ENCODE measurements at regions of chr1 and their contacts with region 1.

Region 1: DNA sequence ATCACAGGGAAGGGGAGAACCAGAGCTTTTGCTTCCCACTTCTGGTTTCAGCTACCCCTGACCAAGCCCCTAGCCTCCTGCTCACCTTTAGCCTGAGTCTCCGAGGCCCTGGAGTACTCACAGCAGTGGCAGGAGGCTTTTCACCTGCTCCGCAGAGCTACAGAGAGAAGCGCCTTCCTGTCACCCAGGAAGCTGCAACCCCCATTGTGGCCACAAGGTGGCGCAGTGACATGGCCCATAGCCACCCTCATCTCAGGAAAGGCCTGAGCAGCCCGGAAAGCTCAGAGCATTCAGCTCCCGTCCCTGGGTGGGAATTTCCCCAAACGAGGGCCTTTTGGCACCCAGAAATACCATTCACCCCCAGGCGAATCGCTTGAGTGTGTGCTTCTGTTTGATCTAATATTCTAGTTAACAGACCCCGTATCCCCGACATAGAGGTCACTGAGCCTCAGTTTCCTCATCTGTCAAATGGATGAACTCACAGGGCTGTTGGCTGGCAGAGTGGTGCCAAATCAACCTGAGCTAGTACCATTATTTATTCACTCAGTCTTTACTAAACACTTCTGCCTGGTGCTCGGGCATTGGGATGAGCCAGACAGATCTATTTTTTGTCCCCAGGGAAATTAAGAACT is 25.3 kb downstream of the A3GALT2 start:
- DNase-seq: peak; percentile 43 to 93
- H3K4me3 ChIP-seq: no peak overlapping the region
- H3K27ac ChIP-seq: peak overlapping the region; percentile 44 to 54
- H3K4me1 ChIP-seq: peaks cover 4 to 13% of the 10 kb centered on the region in 2 donors
- H3K27me3 ChIP-seq: no peaks in the 10 kb centered on the region
- CTCF ChIP-seq: peak; percentile 93 to 98 (median 98)

Region 2: GRCh38 chr1:33127001-33127791 is 168.4 kb before region 1 on chr1:
- intact Hi-C with region 1: loop called (anchors 10 kb)
- DNase-seq: peak; percentile 97 to 100
- H3K4me3 ChIP-seq: peak overlapping the region; percentile 63 to 79
- H3K27ac ChIP-seq: peak overlapping the region; percentile 86 to 88
- H3K4me1 ChIP-seq: peaks cover 7 to 15% of the 10 kb centered on the region in 2 donors
- H3K27me3 ChIP-seq: no peaks in the 10 kb centered on the region
- CTCF ChIP-seq: peak; percentile 85 to 89 (median 87)

Region 3: DNA sequence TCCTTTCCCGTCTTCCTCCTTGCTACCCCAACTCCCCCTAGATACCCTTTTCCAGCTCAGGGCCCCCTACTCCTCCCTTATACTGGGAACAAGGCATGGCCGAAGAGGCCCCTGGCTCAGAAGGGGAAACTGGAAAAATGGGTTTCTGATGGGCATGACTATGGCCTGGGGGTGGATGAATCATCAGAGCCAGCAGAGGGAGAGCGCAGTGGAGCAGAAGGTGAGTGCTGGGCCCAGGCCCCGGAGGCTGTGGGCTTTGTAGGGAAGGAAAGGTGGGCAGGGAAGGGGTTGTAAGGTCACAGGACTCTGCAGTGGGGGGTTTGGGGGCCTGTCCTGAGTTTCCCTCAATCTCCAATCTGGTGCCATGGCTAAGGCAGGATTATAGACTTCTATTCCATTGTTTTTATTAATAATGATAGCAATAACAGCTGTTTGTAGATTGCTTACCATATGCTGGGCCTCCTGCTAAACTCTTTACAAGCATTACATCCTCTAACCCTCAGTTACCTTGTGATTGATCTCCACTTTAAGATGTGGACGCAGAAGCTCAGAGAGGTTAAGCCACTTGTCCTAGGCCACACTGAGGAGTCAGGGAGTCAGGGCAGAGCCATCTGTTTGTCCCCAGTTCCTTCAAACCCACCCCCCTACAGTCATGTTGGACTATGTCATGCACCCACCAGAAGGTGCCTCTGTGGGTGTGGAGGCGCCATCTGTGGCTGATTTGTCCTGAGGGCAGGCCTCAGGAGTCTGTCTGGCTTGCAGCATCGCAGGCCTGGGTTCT is 75.5 kb before region 1 on chr1:
- intact Hi-C with region 1: loop called (anchors 1 kb)
- DNase-seq: no peak
- H3K4me3 ChIP-seq: no peak overlapping the region
- H3K27ac ChIP-seq: no peak overlapping the region
- H3K4me1 ChIP-seq: peaks cover 0 to 2% of the 10 kb centered on the region in 2 donors
- H3K27me3 ChIP-seq: no peaks in the 10 kb centered on the region
- CTCF ChIP-seq: no peak

Region 4: GRCh38 chr1:33256701-33257399 is 38.7 kb before region 1 on chr1:
- intact Hi-C with region 1: loop called (anchors 5 kb)
- DNase-seq: peak in 1 of 2 donors; percentile 76
- H3K4me3 ChIP-seq: peak overlapping the region; percentile 74 to 82
- H3K27ac ChIP-seq: peak overlapping the region; percentile 95 to 97
- H3K4me1 ChIP-seq: peaks cover 19 to 45% of the 10 kb centered on the region in 2 donors
- H3K27me3 ChIP-seq: no peaks in the 10 kb centered on the region
- CTCF ChIP-seq: no peak

Region 5: DNA sequence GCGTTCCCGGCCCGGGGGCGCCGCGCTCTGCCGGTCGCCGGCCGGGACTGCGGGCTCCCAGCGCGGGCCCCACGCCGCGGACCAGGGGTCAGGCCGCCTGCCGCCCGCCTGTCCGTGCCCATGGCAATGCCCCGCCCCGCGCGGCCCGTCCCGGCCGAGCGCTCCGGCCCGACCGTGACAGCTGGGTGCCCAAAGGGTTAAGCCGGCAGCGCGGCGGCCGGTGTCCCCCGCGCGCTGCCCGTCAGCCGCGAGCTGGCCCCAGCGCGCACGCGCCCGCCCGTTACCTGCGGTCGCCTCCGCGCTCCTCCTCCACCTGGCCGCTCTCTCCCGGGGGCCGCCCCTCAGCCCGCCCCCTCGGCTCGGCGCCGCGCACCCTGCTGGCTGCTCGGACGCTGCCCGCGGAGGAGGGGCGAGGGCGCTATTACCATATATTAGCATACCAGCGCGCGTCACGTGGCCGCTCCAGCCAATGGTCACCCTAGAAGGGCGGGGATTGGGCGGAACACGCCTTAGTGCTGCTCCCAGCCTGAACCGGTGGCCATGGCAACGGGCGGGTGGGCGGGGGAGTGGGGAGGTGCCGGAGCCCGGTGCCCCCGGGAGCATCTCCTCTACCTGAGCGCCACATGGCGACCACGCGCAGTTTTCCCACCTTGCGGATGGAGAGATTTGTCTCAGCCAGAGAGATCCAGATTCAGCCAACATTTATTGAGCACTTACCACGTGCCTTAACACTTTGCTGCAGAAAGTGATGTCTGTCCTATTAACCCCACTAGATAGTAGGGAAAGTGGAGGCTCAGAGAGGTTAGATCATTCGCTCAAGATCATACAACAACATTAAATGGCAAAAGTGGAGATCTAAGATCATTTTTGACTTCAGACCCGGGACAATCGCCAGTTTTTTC is 135.4 kb after region 1 on chr1 and contains the start of gene PHC2:
- intact Hi-C with region 1: loop called (anchors 5 kb)
- DNase-seq: peak; percentile 96 to 99
- H3K4me3 ChIP-seq: peak within 1 kb of the TSS; percentile 84 to 94
- H3K27ac ChIP-seq: peak within 1 kb of the TSS; percentile 45 to 51
- H3K4me1 ChIP-seq: no peaks in the 10 kb centered on the region
- H3K27me3 ChIP-seq: no peaks in the 10 kb centered on the region
- CTCF ChIP-seq: peak in 2 of 3 experiments; percentile 37 to 51
- total RNA-seq, gene PHC2: 222 TPM

Region 6: DNA sequence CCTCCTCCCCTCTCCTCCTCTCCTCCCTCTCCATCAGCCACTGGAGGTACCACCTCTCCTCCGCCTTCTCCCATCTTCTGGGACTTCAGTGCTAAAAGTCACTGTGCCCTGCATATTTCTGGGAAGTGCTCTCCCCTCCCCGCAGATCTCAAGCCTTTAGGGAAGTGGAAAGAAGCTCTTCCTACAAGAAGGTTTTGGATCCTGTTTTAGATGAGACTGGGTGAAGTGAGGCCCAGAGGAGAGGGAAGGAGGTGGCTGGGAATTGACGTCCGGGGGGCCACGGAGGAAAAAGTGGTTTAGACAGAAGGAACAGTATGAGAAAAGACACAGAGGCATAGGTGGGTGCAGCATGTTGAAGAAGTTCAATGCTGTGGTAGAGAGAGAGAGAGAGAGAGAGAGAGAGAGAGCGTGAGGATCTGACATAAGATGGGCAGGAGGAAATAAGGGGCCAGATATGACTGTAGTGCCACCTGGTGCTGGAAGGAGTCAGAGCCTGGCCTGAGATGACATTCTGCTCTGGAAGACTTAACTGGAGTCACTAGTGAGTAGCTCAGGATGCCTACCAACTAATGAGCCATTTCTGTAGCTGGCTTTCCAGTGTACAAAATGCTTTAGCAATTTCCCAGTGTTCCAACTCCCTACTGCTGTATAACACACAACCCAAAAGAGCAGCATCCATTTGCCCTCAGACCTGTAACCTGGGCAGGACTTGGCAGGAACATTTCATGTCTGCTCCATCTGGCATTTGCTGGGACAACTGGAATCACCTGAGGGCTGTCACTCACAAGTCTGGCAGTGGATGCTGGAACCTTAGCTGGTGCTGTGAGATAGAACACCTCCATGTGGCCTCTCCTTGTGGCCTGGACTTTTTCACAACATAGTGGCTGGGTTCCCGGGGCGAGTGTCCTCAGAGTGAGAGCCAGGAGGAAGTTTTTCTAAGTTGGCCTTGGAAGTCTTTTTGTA is 160.3 kb after region 1 on chr1:
- intact Hi-C with region 1: loop called (anchors 5 kb)
- DNase-seq: peak in 1 of 2 donors; percentile 78
- H3K4me3 ChIP-seq: no peak overlapping the region
- H3K27ac ChIP-seq: peak overlapping the region; percentile 22 to 69
- H3K4me1 ChIP-seq: peaks cover 6 to 36% of the 10 kb centered on the region in 2 donors
- H3K27me3 ChIP-seq: no peaks in the 10 kb centered on the region
- CTCF ChIP-seq: peak; percentile 40 to 64 (median 61)

Region 7: DNA sequence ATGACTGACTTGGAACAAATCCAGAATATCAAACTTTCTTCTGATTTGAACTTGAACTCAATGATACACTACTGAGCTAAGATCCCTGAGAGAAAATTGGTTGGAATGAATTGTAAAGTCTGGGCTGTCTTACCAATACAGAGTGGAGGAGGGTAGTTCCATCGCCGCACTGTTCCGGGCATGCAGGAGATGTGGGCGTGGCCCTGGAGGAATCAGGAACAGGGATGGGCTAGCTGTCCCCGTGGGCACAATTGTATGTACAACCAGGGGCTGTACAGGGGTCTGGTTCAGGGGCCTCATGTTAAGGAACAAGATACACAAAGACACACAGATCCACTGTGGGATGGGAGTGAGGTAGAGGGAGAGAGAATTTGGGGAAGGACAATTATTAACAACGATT is 321.2 kb after region 1 on chr1:
- intact Hi-C with region 1: loop called (anchors 10 kb)
- DNase-seq: peak in 1 of 2 donors; percentile 43
- H3K4me3 ChIP-seq: no peak overlapping the region
- H3K27ac ChIP-seq: no peak overlapping the region
- H3K4me1 ChIP-seq: no peaks in the 10 kb centered on the region
- H3K27me3 ChIP-seq: no peaks in the 10 kb centered on the region
- CTCF ChIP-seq: no peak

Measured in ascending aorta (tissue), 2 donors.